Activated B cell treated with CpG ODN at 0.5 μM for 24 hours (primary cell): ENCODE measurements at regions of chr11 and their contacts with region 1.

Region 1: GRCh38 chr11:66891851-66892660 is 35.2 kb downstream of the LRFN4 start:
- DNase-seq: no peak
- ATAC-seq: peak; percentile 62
- H3K4me3 Mint-ChIP-seq: no peak overlapping the region
- H3K27ac Mint-ChIP-seq: no peak overlapping the region
- H3K4me1 Mint-ChIP-seq: peaks cover 3% of the 10 kb centered on the region
- H3K27me3 Mint-ChIP-seq: peaks cover 16% of the 10 kb centered on the region
- CTCF ChIP-seq: no peak

Region 2: GRCh38 chr11:66987924-66988637 is 96.0 kb after region 1 on chr11:
- CTCF ChIA-PET with region 1: interaction called, 3 read pairs
- POLR2A ChIA-PET with region 1: interaction called, 12 read pairs
- intact Hi-C with region 1: no loop called
- DNase-seq: no peak
- ATAC-seq: no peak
- H3K4me3 Mint-ChIP-seq: no peak overlapping the region
- H3K27ac Mint-ChIP-seq: no peak overlapping the region
- H3K4me1 Mint-ChIP-seq: no peaks in the 10 kb centered on the region
- H3K27me3 Mint-ChIP-seq: peaks cover 21% of the 10 kb centered on the region
- CTCF ChIP-seq: no peak